GM23248 (cell line): ENCODE measurements at regions of chr7 and their contacts with region 1.

Region 1: DNA sequence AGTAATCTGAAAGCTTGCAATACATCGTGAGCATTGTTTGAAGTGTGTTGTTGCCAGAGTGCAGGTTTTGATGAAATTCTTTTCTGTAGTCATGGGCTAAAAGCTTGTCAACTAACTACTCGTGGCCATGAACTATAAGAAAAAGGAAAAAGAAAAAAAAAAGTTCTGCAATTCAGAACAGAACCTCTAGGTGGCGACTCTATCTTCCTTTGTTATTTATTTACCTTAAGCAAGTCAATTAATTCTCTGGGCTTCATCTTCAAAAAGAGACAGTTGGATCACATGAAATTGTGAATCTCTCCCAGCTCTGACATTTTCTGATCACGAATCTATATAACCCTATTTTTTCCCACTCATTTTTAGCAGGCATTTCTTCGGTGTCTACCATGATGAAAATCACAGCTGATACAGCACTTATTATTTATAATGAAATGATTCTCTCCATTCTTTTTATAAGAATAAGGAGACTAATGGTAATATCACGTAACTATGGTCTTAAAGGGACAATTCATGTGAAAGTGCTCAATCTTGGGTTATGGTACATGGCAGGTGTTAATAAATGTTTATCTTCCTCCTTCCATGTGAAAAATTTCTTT is 18.8 kb downstream of the TMEM196 start:
- DNase-seq: peak; percentile 37
- H3K4me3 ChIP-seq: no peak overlapping the region
- H3K27ac ChIP-seq: no peak overlapping the region
- H3K4me1 ChIP-seq: no peaks in the 10 kb centered on the region
- H3K27me3 ChIP-seq: no peaks in the 10 kb centered on the region

Region 2: GRCh38 chr7:20172736-20173334 is 418.2 kb after region 1 on chr7:
- in situ Hi-C with region 1: loop called (anchors 25 kb)
- DNase-seq: peak; percentile 68
- H3K4me3 ChIP-seq: no peak overlapping the region
- H3K27ac ChIP-seq: no peak overlapping the region
- H3K4me1 ChIP-seq: peaks cover 14% of the 10 kb centered on the region
- H3K27me3 ChIP-seq: no peaks in the 10 kb centered on the region

Region 3: GRCh38 chr7:20310963-20311742 is 556.5 kb after region 1 on chr7:
- in situ Hi-C with region 1: loop called (anchors 10 kb)
- DNase-seq: peak; percentile 66
- H3K4me3 ChIP-seq: no peak overlapping the region
- H3K27ac ChIP-seq: no peak overlapping the region
- H3K4me1 ChIP-seq: peaks cover 8% of the 10 kb centered on the region; the same call in 1 of the 2 replicates
- H3K27me3 ChIP-seq: no peaks in the 10 kb centered on the region